Astrocyte of the cerebellum (primary cell): ENCODE measurements at regions of chr5 and their contacts with region 1.

Region 1: GRCh38 chr5:34486160-34486848 is 169.8 kb upstream of the RAI14 start:
- DNase-seq: peak; percentile 82
- H3K4me3 ChIP-seq: no peak overlapping the region
- CTCF ChIP-seq: peak; percentile 74

Region 2: GRCh38 chr5:34415559-34416198 is 70.6 kb before region 1 on chr5:
- in situ Hi-C with region 1: no loop called
- DNase-seq: no peak
- H3K4me3 ChIP-seq: no peak overlapping the region
- CTCF ChIP-seq: no peak

Region 3: GRCh38 chr5:34522599-34523386 is 36.5 kb after region 1 on chr5:
- in situ Hi-C with region 1: loop called (anchors 5 kb)
- DNase-seq: peak; percentile 84
- H3K4me3 ChIP-seq: no peak overlapping the region
- CTCF ChIP-seq: peak; percentile 66

Region 4: DNA sequence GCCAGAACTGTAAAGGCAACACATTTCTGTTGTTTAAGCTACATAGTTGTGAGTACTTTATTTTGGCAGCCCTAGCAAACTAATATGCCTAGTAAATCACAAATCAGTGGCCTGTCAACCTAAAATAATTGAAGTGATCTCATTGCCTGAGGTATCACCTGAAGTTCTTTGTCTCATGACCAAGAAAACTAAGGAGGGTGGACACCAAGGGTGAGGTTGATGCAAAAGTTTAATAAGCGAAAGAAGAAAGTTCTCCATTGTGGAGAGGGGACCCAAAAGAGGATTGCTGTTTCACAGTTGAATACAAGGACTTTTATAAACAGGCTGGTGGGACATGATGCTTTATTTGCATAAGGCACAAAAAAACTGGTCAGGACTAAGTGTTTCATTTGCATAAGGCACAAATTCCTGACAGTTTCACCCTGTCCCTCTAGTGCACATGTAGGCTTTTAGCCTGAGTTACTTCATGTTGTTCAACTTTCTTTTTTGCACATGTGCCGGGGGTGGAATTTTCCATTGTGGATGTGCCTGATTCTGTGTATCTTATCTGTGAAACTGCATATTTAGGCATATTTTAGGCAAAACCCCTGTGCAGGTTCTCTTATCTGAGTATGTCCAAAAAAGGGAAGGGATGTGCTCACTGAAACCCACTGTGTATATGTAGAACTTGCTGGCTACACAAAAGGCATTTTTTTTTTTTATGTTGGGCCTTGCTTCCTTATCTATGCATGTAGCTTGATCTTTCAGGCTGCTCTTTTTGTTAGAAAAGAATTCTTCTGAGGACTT is 61.2 kb after region 1 on chr5:
- in situ Hi-C with region 1: no loop called
- DNase-seq: no peak
- H3K4me3 ChIP-seq: no peak overlapping the region
- CTCF ChIP-seq: no peak

Region 5: GRCh38 chr5:34570721-34571676 is 84.7 kb after region 1 on chr5:
- in situ Hi-C with region 1: no loop called
- DNase-seq: no peak
- H3K4me3 ChIP-seq: no peak overlapping the region
- CTCF ChIP-seq: no peak

Region 6: GRCh38 chr5:34587355-34588241 is 101.3 kb after region 1 on chr5:
- in situ Hi-C with region 1: no loop called
- DNase-seq: no peak
- H3K4me3 ChIP-seq: no peak overlapping the region
- CTCF ChIP-seq: no peak

Region 7: DNA sequence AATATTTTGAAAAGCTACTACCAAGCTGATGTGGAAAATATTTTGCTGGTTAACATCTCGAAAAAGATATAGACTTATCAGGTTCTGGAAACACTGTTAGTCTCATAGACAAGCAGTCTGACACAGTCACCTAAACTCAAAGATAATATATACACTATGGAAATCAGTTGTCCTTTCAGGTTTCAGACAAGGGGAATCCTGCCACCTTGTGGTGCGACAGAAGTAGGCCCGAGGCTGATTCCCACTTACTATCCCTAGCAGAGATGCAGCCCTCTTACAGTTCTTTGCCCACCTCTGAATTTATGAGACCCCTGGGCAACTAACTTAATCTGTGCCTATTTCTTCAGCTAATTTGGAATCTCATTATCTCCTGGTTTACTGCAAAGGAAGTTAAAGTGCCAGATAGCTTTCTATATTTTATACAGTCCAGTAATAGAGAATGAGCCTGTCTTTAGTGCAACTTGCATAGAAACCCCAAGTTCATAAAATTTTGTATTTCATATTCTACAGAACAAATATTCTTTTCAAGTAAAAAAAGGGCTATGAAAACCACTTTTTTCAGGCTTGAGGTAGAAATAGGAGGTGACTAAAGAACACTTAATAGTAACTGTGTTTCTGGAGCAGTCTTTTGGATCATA is 412.1 kb after region 1 on chr5:
- in situ Hi-C with region 1: loop called (anchors 25 kb)
- DNase-seq: peak; percentile 65
- H3K4me3 ChIP-seq: no peak overlapping the region
- CTCF ChIP-seq: peak; percentile 91